Activated CD4-positive, alpha-beta T cell treated with anti-CD3 and anti-CD28 coated beads, Interleukin-2, amount 10 ng/mL, durations not matched to agents 24 days and 14 days (primary cell): ENCODE measurements at regions of chr2 and their contacts with region 1.

Region 1: DNA sequence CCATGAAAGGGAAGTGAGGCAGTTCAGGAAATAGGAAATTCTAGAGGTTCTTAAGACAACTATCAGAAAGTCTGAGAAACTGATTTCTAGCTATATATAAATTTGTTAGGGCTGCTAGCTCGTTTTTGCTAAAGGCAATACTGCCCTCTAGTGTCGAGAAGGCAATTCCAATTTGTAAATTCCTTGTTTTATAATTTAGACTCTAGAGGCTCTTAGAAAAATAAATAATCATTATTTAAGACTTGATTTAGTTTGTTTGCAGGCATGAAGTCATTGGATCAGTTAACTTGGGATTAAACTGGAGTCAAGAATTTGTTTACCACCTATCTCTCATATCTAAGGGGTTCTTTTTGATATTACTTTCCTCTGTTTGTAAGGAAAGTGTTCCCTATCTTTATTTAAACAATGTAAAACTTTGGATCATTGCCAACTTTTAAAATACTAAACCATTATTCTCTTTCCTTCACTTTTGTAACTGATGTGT is 66.2 kb downstream of the ACVR2A start:
- DNase-seq: peak; percentile 82
- H3K4me3 Mint-ChIP-seq: no peak overlapping the region
- H3K27ac Mint-ChIP-seq: no peak overlapping the region
- H3K4me1 Mint-ChIP-seq: peaks cover 9% of the 10 kb centered on the region
- H3K27me3 Mint-ChIP-seq: no peaks in the 10 kb centered on the region

Region 2: GRCh38 chr2:146734042-146734820 is 1176.8 kb before region 1 on chr2:
- intact Hi-C with region 1: loop called (anchors 2 kb)
- DNase-seq: no peak
- H3K4me3 Mint-ChIP-seq: no peak overlapping the region
- H3K27ac Mint-ChIP-seq: no peak overlapping the region
- H3K4me1 Mint-ChIP-seq: no peaks in the 10 kb centered on the region
- H3K27me3 Mint-ChIP-seq: no peaks in the 10 kb centered on the region

Region 3: DNA sequence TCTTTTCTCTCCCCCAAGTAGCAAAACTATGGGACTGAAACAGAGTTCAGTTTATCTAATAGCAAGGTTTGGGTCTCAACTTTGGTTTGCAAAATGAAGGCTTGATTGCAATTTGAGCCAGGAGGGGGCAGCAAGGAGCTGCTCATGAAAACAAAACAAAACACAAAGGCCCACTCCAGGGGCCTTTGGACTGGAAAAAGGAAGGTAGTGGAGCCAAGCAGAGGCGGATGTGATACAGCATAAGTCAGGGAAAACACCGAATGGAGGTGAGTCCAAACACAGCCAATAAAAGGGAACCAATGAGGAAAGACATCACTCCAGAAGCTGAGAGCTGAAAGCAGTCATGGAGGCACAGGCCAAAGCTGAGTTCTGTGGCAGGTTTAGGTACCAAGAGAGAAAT is 865.9 kb before region 1 on chr2:
- intact Hi-C with region 1: loop called (anchors 1 kb)
- DNase-seq: peak; percentile 81
- H3K4me3 Mint-ChIP-seq: no peak overlapping the region
- H3K27ac Mint-ChIP-seq: no peak overlapping the region
- H3K4me1 Mint-ChIP-seq: peaks cover 3% of the 10 kb centered on the region
- H3K27me3 Mint-ChIP-seq: peaks cover 12% of the 10 kb centered on the region

Region 4: DNA sequence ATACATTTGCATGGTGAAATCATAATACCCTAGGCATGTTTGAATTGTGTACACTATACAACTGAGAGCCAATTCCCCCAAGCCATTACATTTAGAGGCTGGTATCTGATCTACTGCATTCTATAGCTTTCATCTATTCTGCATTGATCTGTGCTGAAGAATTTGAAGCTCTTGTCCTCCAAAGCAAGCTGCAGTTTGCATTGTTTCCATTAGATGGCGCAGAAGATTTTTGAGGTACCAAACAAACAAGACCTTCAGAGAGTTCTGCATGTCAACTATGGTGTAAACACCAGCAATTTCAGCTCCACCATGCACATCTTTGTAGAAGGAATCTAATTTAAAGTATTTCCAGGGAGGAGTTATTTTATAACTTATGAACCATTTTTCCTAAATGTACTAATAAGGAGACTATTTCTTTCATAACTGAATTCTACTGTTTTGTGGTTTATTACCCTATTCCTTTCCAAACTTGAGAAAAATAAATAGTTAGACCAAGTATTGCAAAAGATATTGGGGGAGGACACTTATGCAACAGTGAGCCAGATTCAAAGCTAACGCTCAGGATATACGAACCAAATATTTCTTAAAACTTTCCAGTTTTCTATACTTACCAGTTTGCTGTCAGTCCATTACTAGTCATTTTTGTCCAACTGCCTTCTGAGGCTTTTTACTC is 828.0 kb before region 1 on chr2:
- intact Hi-C with region 1: loop called (anchors 1 kb)
- DNase-seq: peak; percentile 91
- H3K4me3 Mint-ChIP-seq: no peak overlapping the region
- H3K27ac Mint-ChIP-seq: no peak overlapping the region
- H3K4me1 Mint-ChIP-seq: peaks cover 6% of the 10 kb centered on the region
- H3K27me3 Mint-ChIP-seq: peaks cover 3% of the 10 kb centered on the region

Region 5: DNA sequence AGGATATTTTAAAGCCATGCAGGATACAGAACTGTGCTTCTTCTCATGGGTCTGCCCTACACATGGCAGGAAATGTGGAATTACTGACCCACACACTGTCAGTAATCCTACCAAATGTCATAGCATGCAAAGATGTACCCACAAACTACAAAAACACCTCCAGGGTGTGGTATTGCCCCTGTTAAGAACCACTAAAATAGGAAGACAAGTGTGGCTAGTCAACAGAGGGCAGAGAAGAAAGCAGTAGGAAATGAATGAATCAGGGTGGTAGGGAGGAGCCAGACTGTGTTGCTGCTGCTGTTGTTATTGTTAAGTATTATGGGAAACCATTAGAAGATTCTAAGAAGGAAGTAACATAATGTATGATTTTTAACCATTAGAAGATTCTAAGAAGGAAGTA is 622.9 kb before region 1 on chr2:
- intact Hi-C with region 1: loop called (anchors 2 kb)
- DNase-seq: peak; percentile 81
- H3K4me3 Mint-ChIP-seq: peak overlapping the region; percentile 4
- H3K27ac Mint-ChIP-seq: peak overlapping the region; percentile 63
- H3K4me1 Mint-ChIP-seq: peaks cover 35% of the 10 kb centered on the region
- H3K27me3 Mint-ChIP-seq: no peaks in the 10 kb centered on the region

Region 6: GRCh38 chr2:147331790-147332419 is 579.1 kb before region 1 on chr2:
- intact Hi-C with region 1: loop called (anchors 5 kb)
- DNase-seq: peak; percentile 81
- H3K4me3 Mint-ChIP-seq: no peak overlapping the region
- H3K27ac Mint-ChIP-seq: no peak overlapping the region
- H3K4me1 Mint-ChIP-seq: peaks cover 16% of the 10 kb centered on the region
- H3K27me3 Mint-ChIP-seq: peaks cover 3% of the 10 kb centered on the region